Caco-2 (cell line): ENCODE measurements at regions of chr3 and their contacts with region 1.

Region 1: GRCh38 chr3:152937234-152937633 is 102.3 kb downstream of the P2RY1 start:
- DNase-seq: no peak
- H3K4me3 ChIP-seq: no peak overlapping the region
- H3K4me3 Mint-ChIP-seq: no peak overlapping the region
- H3K27ac Mint-ChIP-seq: no peak overlapping the region
- H3K4me1 ChIP-seq: peaks cover 8% of the 10 kb centered on the region; the same call in 1 of the 2 replicates
- H3K4me1 Mint-ChIP-seq: peaks cover 14% of the 10 kb centered on the region
- H3K27me3 ChIP-seq: no peaks in the 10 kb centered on the region
- H3K27me3 Mint-ChIP-seq: no peaks in the 10 kb centered on the region
- CTCF ChIP-seq: peak in 1 of 2 experiments; percentile 15

Region 2: DNA sequence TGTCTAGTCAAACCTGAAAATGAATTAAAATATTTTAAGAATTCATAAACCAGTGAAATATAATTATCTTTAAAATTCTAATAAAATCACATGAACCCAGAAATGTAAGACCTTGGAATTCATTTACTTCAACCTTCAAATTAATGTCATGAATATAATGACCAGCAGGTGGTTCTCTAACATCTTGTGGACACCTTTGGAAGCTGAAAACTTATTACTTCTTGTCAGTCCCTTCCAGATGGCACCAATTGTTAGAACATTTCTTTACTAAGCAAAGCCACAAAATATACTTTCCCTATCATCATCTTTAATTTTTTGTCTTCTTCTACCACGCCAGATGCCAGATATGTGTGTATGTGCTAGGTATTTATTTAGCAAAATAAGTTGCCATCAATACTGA is 428.5 kb before region 1 on chr3:
- CTCF ChIA-PET with region 1: no interaction called
- POLR2A ChIA-PET with region 1: no interaction called
- intact Hi-C with region 1: loop called (anchors 1 kb)
- DNase-seq: peak in 1 of 2 experiments; percentile 24
- H3K4me3 ChIP-seq: no peak overlapping the region
- H3K4me3 Mint-ChIP-seq: no peak overlapping the region
- H3K27ac Mint-ChIP-seq: no peak overlapping the region
- H3K4me1 ChIP-seq: no peaks in the 10 kb centered on the region
- H3K4me1 Mint-ChIP-seq: no peaks in the 10 kb centered on the region
- H3K27me3 ChIP-seq: no peaks in the 10 kb centered on the region
- H3K27me3 Mint-ChIP-seq: no peaks in the 10 kb centered on the region
- CTCF ChIP-seq: peak; percentile 22 to 43

Region 3: DNA sequence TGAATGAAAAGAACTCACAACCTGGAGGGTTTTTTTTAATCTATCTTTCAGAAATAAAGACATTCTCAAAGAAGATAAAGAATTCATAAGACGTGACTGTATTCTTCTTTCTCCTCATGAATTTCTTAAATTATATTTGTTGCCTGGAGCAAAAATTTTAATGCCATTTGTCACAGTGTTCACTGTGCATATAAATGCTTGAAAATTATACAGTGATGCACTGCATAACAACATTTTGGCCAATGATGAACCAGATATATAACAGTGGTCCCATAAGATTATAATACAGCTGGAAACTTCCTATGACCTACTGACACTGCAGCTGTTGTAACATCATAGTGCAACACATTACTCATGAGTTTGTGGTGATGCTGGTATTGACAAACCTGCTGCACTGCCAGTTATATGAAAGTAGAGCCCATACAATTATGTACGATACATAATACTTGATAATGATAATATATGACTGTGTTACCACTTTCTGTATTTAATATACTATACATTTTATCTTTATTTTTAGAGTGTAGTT is 35.0 kb before region 1 on chr3:
- CTCF ChIA-PET with region 1: no interaction called
- POLR2A ChIA-PET with region 1: no interaction called
- intact Hi-C with region 1: no loop called
- DNase-seq: no peak
- H3K4me3 ChIP-seq: no peak overlapping the region
- H3K4me3 Mint-ChIP-seq: no peak overlapping the region
- H3K27ac Mint-ChIP-seq: no peak overlapping the region
- H3K4me1 ChIP-seq: no peaks in the 10 kb centered on the region
- H3K4me1 Mint-ChIP-seq: no peaks in the 10 kb centered on the region
- H3K27me3 ChIP-seq: no peaks in the 10 kb centered on the region
- H3K27me3 Mint-ChIP-seq: no peaks in the 10 kb centered on the region
- CTCF ChIP-seq: no peak